Heart right ventricle (tissue), 16 donors: ENCODE measurements at regions of chr9 and their contacts with region 1.

Region 1: GRCh38 chr9:121545875-121546423 is 46.3 kb upstream of the GGTA1 start:
- DNase-seq: peak; percentile 97
- ATAC-seq: peak; percentile 90 to 95 (median 94)
- H3K4me3 ChIP-seq: peak overlapping the region in 6 of 10 donors; percentile 17 to 39 (median 28)
- H3K27ac ChIP-seq: peak overlapping the region in 5 of 10 donors; percentile 26 to 54 (median 47)
- H3K4me1 ChIP-seq: peaks cover 5 to 27% (median 20%) of the 10 kb centered on the region in 9 donors
- H3K27me3 ChIP-seq: peaks cover 0 to 5% (median 0%) of the 10 kb centered on the region in 7 donors
- CTCF ChIP-seq: peak; percentile 95 to 99 (median 96)

Region 2: DNA sequence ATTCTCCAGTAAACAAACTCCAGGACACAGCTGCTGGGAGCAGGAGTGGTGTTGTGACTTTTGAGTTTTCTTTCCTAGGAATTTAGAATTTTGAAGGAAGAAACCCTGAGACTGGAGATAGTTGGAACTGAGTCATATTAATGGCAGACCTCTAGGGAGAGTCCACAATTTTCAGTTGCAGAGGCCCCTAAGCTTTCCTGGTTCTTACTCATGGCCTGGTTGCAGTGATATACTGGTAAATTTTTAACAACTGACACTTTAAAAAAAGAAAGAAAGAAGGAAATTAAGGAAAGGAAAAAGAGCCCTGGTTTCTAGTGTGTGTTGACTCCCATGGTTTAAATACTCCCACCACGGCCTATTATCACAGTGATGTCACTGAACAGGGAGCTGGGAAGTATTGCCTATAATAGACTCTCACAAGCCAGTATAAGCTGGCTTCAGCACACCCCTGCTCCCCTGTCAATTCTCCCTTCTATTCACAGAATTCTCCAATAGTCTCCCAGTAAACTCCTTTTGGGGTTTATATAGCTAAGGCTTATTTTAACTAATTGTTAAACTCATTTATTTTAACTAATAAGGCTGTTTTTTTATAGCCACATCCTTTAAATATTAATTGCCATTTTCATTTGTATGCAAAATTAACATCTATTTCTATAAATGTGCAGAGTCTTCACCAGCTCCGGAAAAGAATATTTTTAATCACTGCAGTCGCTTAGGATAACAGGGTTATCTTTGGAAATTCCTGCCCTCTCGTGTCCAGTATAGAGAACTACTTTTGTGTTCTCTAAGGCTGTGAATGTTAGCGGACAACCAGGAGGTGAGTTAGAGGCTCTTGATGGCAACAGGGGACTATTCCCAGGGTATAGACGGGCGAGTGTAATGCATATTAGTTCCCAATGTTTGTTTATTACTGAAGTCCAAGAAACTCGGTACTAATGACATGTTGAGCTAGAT is 106.0 kb before region 1 on chr9:
- intact Hi-C with region 1: no loop called
- DNase-seq: no peak
- ATAC-seq: peak; percentile 51 to 85 (median 82)
- H3K4me3 ChIP-seq: no peak overlapping the region
- H3K27ac ChIP-seq: no peak overlapping the region
- H3K4me1 ChIP-seq: peaks cover 0 to 22% (median 8%) of the 10 kb centered on the region in 9 donors
- H3K27me3 ChIP-seq: no peaks in the 10 kb centered on the region
- CTCF ChIP-seq: peak in 8 of 9 donors; percentile 7 to 64 (median 38)

Region 3: GRCh38 chr9:121621113-121621449 is 75.1 kb after region 1 on chr9:
- intact Hi-C with region 1: loop called in 1 of 10 experiments (anchors 5 kb)
- DNase-seq: no peak
- ATAC-seq: peak in 3 of 8 donors; percentile 6 to 48 (median 24)
- H3K4me3 ChIP-seq: no peak overlapping the region
- H3K27ac ChIP-seq: peak overlapping the region in 9 of 10 donors; percentile 7 to 89 (median 50)
- H3K4me1 ChIP-seq: peaks cover 8 to 86% (median 67%) of the 10 kb centered on the region in 9 donors
- H3K27me3 ChIP-seq: no peaks in the 10 kb centered on the region
- CTCF ChIP-seq: peak in 8 of 9 donors; percentile 16 to 63 (median 47)

Region 4: GRCh38 chr9:121674952-121675351 is 129.0 kb after region 1 on chr9:
- intact Hi-C with region 1: loop called in 5 of 10 experiments (anchors 5 to 10 kb)
- DNase-seq: no peak
- ATAC-seq: no peak
- H3K4me3 ChIP-seq: no peak overlapping the region
- H3K27ac ChIP-seq: no peak overlapping the region
- H3K4me1 ChIP-seq: peaks cover 22 to 76% (median 58%) of the 10 kb centered on the region in 9 donors
- H3K27me3 ChIP-seq: no peaks in the 10 kb centered on the region
- CTCF ChIP-seq: no peak

Region 5: DNA sequence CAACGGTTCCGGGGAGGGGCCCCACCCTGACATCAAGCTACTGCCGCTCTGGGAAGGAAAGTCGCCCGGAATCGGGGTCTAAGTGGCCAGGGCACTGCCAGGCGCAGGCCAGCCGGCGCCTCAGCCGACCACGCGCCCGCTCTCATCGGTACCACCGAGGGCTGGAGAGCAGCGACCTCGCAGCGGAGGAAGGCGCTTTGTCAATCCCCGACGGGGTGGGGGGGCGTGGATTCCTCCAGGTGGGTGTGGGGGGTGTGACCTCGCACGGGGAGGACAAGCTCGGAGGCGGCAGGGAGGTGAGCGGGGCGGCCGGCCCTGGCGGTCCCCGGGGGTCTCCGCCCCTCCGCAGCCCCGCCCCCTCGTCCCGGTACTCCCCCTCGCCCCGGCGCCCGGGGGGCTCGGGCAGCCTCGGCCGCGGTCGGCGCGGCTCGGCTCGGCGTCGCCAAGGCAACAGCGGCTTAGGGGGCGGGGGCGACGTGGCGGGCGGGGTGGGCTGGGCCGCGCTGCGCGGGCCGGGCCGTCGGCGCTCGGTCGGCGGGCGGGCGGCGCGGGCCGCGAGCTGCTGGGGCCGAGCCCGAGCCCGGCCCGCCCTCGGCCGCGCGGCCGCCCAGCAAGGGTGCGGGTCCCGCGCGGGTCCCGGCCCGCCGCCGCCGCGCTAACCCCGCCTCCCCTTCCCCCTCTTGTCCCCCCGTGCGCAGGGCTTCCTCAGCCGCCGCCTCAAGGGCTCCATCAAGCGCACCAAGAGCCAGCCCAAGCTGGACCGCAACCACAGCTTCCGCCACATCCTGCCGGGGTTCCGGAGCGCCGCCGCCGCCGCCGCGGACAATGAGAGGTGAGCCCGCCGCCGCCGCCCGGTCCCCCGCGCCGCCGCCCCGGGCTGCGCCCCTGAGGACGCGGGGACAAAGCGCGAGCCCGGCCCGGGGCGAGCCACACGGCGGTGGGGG is 152.9 kb after region 1 on chr9:
- intact Hi-C with region 1: loop called in 4 of 10 experiments (anchors 5 to 10 kb)
- DNase-seq: peak; percentile 74 to 78
- ATAC-seq: peak; percentile 9 to 78 (median 40)
- H3K4me3 ChIP-seq: peak overlapping the region; percentile 44 to 70 (median 57)
- H3K27ac ChIP-seq: peak overlapping the region; percentile 25 to 89 (median 80)
- H3K4me1 ChIP-seq: peaks cover 26 to 66% (median 43%) of the 10 kb centered on the region in 9 donors
- H3K27me3 ChIP-seq: peaks cover 0 to 54% (median 0%) of the 10 kb centered on the region in 7 donors
- CTCF ChIP-seq: no peak

Region 6: GRCh38 chr9:121992571-121993212 is 446.7 kb after region 1 on chr9:
- intact Hi-C with region 1: loop called in 9 of 10 experiments (anchors 1 to 5 kb)
- DNase-seq: peak; percentile 34 to 67
- ATAC-seq: peak; percentile 46 to 82 (median 78)
- H3K4me3 ChIP-seq: no peak overlapping the region
- H3K27ac ChIP-seq: no peak overlapping the region
- H3K4me1 ChIP-seq: peaks cover 0 to 28% (median 6%) of the 10 kb centered on the region in 9 donors
- H3K27me3 ChIP-seq: no peaks in the 10 kb centered on the region
- CTCF ChIP-seq: peak; percentile 80 to 91 (median 85)